Sigmoid colon (tissue), 7 donors: ENCODE measurements at regions of chr10 and their contacts with region 1.

Region 1: GRCh38 chr10:13776861-13777311 is 190.1 kb downstream of the PRPF18 start:
- DNase-seq: no peak
- H3K4me3 ChIP-seq: no peak overlapping the region
- H3K27ac ChIP-seq: no peak overlapping the region
- H3K4me1 ChIP-seq: peaks cover 0 to 7% (median 0%) of the 10 kb centered on the region in 4 donors
- H3K27me3 ChIP-seq: no peaks in the 10 kb centered on the region
- CTCF ChIP-seq: no peak
- EP300 ChIP-seq: no peak
- POLR2A ChIP-seq: no peak

Region 2: GRCh38 chr10:13371897-13372470 is 404.9 kb before region 1 on chr10:
- intact Hi-C with region 1: loop called (anchors 5 kb)
- DNase-seq: peak; percentile 83
- H3K4me3 ChIP-seq: no peak overlapping the region
- H3K27ac ChIP-seq: no peak overlapping the region
- H3K4me1 ChIP-seq: no peaks in the 10 kb centered on the region
- H3K27me3 ChIP-seq: peaks cover 0 to 5% (median 0%) of the 10 kb centered on the region in 3 donors
- CTCF ChIP-seq: peak; percentile 51 to 90 (median 86)
- EP300 ChIP-seq: no peak
- POLR2A ChIP-seq: no peak

Region 3: GRCh38 chr10:13613519-13613918 is 163.4 kb before region 1 on chr10:
- intact Hi-C with region 1: loop called (anchors 2 kb)
- DNase-seq: no peak
- H3K4me3 ChIP-seq: no peak overlapping the region
- H3K27ac ChIP-seq: no peak overlapping the region
- H3K4me1 ChIP-seq: peaks cover 0 to 18% (median 13%) of the 10 kb centered on the region in 4 donors
- H3K27me3 ChIP-seq: no peaks in the 10 kb centered on the region
- CTCF ChIP-seq: peak in 3 of 4 experiments; percentile 12 to 22 (median 21)
- EP300 ChIP-seq: no peak
- POLR2A ChIP-seq: no peak

Region 4: DNA sequence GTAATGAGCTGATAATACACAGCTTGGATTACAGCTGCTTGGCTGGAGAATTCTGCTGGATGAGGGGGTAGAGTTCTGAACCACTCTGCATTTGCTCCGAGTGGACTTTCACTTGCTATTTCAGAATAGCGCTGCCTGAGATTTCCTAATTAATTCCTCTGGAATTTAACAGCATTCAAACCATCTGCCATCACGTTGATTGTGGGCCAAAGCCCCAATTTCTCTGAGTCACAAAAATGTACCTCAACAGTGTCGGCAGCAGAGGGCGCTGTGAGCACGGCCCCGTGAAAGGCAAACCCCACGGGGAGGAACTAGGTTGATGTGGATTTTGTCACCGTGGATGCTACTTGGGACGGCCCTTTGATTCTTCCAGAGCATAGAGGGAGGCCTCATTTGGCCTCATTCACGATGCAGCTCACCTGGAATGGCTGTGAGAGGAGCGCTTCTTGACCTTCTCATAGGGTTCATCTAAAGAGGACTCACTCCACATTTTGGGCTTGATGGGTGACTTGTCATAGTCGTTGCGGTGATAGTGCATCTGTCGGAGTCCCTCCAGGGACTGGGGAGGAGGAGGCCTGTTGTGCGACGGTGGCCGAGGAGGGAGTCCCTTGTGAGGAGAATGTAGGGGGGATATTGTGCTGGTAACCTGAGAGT is 116.9 kb before region 1 on chr10:
- intact Hi-C with region 1: loop called (anchors 1 kb)
- DNase-seq: peak; percentile 85
- H3K4me3 ChIP-seq: no peak overlapping the region
- H3K27ac ChIP-seq: peak overlapping the region; percentile 45 to 73 (median 61)
- H3K4me1 ChIP-seq: peaks cover 0 to 36% (median 17%) of the 10 kb centered on the region in 4 donors
- H3K27me3 ChIP-seq: no peaks in the 10 kb centered on the region
- CTCF ChIP-seq: peak; percentile 86 to 90 (median 88)
- EP300 ChIP-seq: no peak
- POLR2A ChIP-seq: no peak

Region 5: GRCh38 chr10:13717931-13718772 is 58.7 kb before region 1 on chr10:
- intact Hi-C with region 1: loop called (anchors 5 kb)
- DNase-seq: peak; percentile 78
- H3K4me3 ChIP-seq: peak overlapping the region in 3 of 4 donors; percentile 30 to 39 (median 35)
- H3K27ac ChIP-seq: peak overlapping the region; percentile 52 to 79 (median 70)
- H3K4me1 ChIP-seq: peaks cover 0 to 19% (median 5%) of the 10 kb centered on the region in 4 donors
- H3K27me3 ChIP-seq: no peaks in the 10 kb centered on the region
- CTCF ChIP-seq: no peak
- EP300 ChIP-seq: no peak
- POLR2A ChIP-seq: no peak